GM13977 (cell line): ENCODE measurements at regions of chr2 and their contacts with region 1.

Region 1: GRCh38 chr2:11784747-11785610 is 38.5 kb downstream of the LPIN1 start:
- DNase-seq: peak; percentile 68
- CTCF ChIP-seq: peak; percentile 77

Region 2: GRCh38 chr2:11688222-11689069 is 96.5 kb before region 1 on chr2:
- in situ Hi-C with region 1: loop called (anchors 10 kb)
- DNase-seq: peak; percentile 83
- CTCF ChIP-seq: peak; percentile 81

Region 3: GRCh38 chr2:12005886-12006681 is 221.1 kb after region 1 on chr2:
- in situ Hi-C with region 1: no loop called
- DNase-seq: peak; percentile 45
- CTCF ChIP-seq: no peak